Psoas muscle (tissue), 8 donors: ENCODE measurements at regions of chrX and their contacts with region 1.

Region 1: GRCh38 chrX:139759637-139760036 is 51.7 kb upstream of the MCF2 start:
- DNase-seq: no peak
- ATAC-seq: no peak
- H3K4me3 ChIP-seq: no peak overlapping the region
- H3K27ac ChIP-seq: no peak overlapping the region
- H3K4me1 ChIP-seq: no peaks in the 10 kb centered on the region
- H3K27me3 ChIP-seq: no peaks in the 10 kb centered on the region
- CTCF ChIP-seq: peak; percentile 18

Region 2: DNA sequence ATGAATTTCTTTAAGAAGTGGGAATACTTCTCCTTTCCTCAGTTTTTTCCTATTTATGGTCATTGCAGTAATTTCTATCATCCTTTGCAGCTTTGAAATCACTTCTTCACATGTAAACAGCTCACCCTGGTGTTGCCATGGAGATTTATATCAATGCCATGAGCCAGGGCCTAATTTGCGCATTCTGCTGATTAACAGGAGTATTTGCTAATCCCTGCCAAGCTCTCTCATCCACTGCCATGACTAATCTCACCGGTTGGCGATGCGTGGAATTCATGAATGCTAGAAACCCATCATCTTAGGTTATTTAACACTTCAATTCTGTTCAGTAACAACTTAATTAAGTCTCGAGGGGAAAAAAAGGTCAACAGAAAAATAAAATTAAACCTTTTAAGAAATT is 1036.3 kb before region 1 on chrX:
- intact Hi-C with region 1: loop called in 1 of 2 experiments (anchors 10 kb)
- DNase-seq: no peak
- ATAC-seq: no peak
- H3K4me3 ChIP-seq: no peak overlapping the region
- H3K27ac ChIP-seq: no peak overlapping the region
- H3K4me1 ChIP-seq: no peaks in the 10 kb centered on the region
- H3K27me3 ChIP-seq: peaks cover 0 to 6% (median 0%) of the 10 kb centered on the region in 3 donors
- CTCF ChIP-seq: no peak